ENCODE measurements at regions of chr6 and their contacts with region 1.

Region 1: GRCh38 chr6:78883651-78884050 is 16.3 kb downstream of the IRAK1BP1 start:
- DNase-seq: no peak
- ATAC-seq: no peak

Region 2: DNA sequence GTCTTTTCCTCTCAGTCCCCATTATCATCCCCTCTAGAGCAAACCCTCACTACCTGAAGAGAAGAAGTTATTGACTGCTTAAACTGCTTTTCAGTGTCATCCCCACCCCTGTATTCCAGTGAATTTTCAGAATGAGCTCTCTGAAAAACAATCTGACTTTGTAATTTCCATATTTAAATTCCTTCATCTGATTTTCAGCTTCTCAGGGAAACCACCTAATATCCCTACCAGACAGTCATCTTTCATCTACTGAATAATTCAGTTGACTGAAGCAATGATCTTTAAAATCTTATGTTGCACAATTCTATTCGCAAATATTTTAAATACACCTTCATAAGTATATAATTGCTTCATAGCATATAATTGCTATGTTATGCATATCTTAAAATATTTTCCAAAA is 1679.1 kb before region 1 on chr6:
- intact Hi-C with region 1: loop called (anchors 5 kb)
- DNase-seq: no peak
- ATAC-seq: no peak

Region 3: GRCh38 chr6:78910591-78911171 is 27.0 kb after region 1 on chr6:
- intact Hi-C with region 1: no loop called
- DNase-seq: no peak
- ATAC-seq: peak; percentile 72

Measured in sciatic nerve (tissue), 2 donors.